Endothelial cell of umbilical vein (primary cell): ENCODE measurements at regions of chr11 and their contacts with region 1.

Region 1: DNA sequence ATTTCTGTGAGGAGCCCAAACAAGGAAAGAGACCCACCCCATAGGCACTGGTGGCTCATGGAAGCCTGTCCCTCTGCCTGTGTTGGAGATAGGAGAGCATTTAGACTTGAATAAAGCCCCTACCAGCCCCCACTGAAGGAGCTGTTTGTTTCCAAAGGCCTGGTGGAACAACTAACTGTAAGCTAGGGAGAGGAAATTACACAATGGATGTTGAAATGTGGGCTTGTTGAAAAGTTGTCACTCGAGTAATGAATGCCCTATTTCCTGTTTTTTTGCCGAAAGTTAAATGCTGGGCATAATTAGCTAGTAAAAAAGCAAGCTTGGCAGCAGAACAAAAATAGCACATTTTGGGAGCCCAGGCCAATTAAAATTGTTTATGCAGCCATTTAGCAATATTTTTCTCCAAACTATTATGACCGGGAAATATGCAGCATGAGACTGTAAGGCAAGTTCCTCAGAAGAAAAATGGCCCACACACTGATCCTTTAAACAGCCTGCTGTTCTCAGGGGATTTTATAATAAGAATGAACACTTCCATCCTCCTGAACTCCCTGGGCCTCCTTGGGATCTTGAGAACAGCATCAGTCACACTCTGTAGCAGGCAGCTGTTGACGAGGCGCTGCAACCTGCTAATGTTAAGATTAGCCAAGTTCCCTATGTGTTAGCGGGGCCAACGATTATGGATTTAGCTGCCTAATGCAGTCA is 38.6 kb upstream of the LMO2 start:
- DNase-seq: peak; percentile 98
- H3K4me3 ChIP-seq: peak overlapping the region in 1 of 3 experiments; percentile 15
- H3K27ac ChIP-seq: peak overlapping the region; percentile 97
- H3K4me1 ChIP-seq: peaks cover 48% of the 10 kb centered on the region
- H3K27me3 ChIP-seq: no peaks in the 10 kb centered on the region
- CTCF ChIP-seq: no peak
- POLR2A ChIP-seq: peak; percentile 68

Region 2: DNA sequence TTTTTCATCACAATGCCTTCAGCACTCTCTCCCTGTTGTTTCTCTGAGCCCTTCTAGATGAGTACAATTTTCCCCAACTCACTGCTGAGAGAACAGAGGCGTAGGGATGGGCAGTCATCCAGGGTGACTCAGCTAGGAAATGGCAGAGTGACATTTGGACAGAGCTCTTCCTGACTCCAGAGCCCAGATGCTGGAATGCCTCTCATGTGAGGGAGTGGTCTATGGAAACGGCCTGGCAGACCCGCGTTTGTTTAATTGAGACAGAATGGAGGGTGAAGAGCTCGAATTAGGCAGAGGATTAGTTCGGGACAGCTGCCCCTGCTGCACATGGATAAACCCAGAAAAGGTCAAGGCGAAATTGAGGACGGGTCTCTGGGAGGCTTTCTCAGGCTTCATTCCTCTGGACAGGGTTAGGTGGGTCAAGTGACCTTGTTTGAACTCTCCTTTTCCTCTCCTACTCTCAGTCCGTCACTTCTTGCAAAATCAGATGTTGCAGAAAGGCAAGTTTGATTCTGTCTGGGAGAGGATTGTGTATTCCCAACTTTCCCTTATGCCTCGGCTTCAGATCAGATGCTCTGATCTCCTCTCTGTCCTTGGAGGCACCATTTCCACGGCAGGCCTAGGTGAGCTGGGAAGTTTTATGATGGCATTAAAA is 31.0 kb before region 1 on chr11:
- CTCF ChIA-PET with region 1: interaction called, 17 read pairs
- POLR2A ChIA-PET with region 1: interaction called, 5 read pairs
- dilution Hi-C with region 1: no loop called
- intact Hi-C with region 1: loop called (anchors 2 kb)
- DNase-seq: peak; percentile 98
- H3K4me3 ChIP-seq: no peak overlapping the region
- H3K27ac ChIP-seq: peak overlapping the region; percentile 19
- H3K4me1 ChIP-seq: peaks cover 18% of the 10 kb centered on the region
- H3K27me3 ChIP-seq: peaks cover 2 to 3% of the 10 kb centered on the region in 2 experiments
- CTCF ChIP-seq: no peak
- POLR2A ChIP-seq: no peak

Region 3: DNA sequence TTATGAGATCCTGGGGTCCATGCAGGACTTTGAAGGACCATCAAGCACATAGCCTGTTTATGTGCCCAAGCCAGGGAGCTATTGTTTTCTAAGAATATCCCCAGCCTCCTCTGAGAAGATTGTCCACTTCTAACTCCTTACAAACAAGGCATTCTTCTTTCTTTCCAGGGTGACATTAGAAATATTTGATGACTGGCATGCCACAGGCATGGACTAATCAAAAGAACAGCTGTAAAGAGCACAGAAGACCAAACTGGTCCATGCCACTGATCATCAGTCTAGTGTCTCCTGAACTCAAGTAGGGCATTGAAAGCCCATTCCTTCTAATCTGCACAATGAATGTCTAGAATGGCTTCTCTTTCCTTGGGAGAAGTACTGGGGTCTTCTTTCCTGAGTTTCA is 13.7 kb before region 1 on chr11:
- CTCF ChIA-PET with region 1: interaction called, 12 read pairs
- POLR2A ChIA-PET with region 1: no interaction called
- dilution Hi-C with region 1: no loop called
- intact Hi-C with region 1: no loop called
- DNase-seq: no peak
- H3K4me3 ChIP-seq: no peak overlapping the region
- H3K27ac ChIP-seq: no peak overlapping the region
- H3K4me1 ChIP-seq: no peaks in the 10 kb centered on the region
- H3K27me3 ChIP-seq: peaks cover 9% of the 10 kb centered on the region in 2 experiments
- CTCF ChIP-seq: no peak
- POLR2A ChIP-seq: no peak